ENCODE measurements at regions of chr7 and their contacts with region 1.

Region 1: DNA sequence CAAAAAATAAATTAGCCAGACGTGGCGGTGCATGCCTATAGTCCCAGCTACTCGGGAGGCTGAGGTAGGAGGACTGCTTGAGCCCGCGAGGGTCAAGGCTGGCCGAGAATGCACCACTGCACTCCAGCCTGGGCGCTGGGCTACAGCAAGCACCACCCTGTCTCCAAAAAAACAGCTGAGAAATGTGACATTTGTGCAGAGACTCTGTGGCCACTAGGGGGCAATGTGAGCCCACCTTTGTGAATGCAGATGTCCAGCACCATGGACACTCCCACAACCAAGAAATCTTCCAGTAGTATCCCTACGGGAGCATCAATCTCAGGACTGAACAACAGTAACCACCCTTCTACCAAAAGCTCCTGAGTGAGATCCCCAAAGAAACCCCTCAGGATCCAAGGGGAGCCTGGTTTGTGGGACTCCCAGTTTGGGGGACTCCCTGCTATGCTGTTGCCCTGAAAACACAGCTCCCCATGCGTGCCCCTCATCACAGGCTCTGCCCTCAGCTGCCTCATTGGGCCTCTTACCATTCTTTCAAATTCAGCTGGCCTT is 6.2 kb upstream of the AHCYL2 start:
- DNase-seq: peak; percentile 58
- H3K4me3 ChIP-seq: no peak overlapping the region
- H3K27ac ChIP-seq: no peak overlapping the region
- H3K27me3 ChIP-seq: no peaks in the 10 kb centered on the region
- CTCF ChIP-seq: peak; percentile 90

Region 2: DNA sequence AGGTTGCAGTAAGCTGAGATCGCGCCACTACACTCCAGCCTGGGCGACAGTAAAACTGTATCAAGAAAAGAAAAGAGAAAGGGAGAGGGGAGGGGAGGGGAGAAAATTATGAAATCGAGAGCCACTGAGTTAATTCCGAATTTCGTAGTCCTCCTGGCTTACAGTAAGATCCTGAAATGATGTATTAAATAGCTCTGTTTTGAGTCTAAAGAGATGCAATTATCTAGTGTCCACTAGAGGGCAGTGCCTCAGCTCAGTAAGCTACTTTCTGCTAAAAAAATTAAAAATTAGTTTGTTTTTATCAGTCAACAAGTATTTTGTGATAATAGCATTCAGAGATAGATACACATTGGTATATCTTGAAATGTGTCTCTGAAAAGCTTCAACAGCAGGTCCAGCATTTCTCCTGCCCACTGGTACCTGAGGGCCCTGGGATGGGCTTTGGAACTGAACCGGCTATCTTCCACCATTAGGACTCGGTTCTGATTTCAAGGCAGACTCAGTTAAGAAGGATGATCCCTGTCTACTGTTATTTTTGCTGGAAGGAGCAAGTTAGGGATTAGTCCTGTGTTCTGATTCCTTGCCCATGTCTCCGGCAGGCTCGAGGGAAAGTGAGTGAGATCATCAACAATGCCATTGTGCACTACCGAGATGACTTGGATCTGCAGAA is 54.6 kb before region 1 on chr7:
- CTCF ChIA-PET with region 1: interaction called, 188 read pairs
- POLR2A ChIA-PET with region 1: no interaction called
- DNase-seq: peak; percentile 48
- H3K4me3 ChIP-seq: no peak overlapping the region
- H3K27ac ChIP-seq: no peak overlapping the region
- H3K27me3 ChIP-seq: peaks cover 19% of the 10 kb centered on the region
- CTCF ChIP-seq: peak; percentile 83

Region 3: DNA sequence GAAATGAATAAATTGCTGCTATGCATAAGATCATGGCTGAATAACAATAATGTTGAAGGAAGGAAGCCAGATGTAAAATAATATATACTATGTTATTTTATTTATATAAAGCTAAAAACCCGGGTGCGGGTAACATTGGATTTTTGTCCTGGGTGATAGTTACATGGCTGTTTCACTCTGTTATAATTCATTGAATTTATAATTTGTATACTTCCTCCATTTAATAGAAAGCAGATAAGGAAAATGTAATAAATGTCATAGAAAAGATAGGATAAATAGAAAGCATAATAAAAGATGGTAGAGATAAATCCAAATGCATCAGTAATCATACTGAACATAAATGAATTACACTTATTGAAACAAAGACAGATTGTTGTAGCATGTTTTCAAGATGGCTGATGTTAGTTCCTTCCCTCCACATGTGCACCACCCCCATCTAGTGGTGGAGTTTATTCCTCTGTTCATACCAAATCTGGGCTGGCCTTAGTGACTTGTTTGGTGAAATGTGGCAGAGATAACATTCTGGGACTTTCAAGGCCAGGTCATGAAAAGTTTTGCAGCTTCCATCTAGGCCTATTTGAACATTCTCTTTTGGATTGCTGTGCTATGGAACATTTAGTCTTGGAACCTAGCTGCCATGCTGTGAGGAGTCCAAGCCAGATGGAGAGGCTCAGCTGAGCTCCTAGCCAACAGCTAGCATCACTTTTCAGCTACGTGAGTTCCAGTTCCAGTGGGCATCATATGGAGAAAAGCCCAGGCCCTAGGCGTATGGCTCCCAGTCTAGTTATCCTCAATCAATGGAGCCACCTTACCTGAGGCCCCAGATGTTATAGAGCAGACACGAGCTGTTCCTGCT is 53.1 kb after region 1 on chr7:
- CTCF ChIA-PET with region 1: interaction called, 42 read pairs
- POLR2A ChIA-PET with region 1: no interaction called
- DNase-seq: peak; percentile 6
- H3K4me3 ChIP-seq: no peak overlapping the region
- H3K27ac ChIP-seq: no peak overlapping the region
- H3K27me3 ChIP-seq: no peaks in the 10 kb centered on the region
- CTCF ChIP-seq: peak; percentile 60

Region 4: GRCh38 chr7:129298268-129298893 is 79.8 kb after region 1 on chr7:
- CTCF ChIA-PET with region 1: interaction called, 126 read pairs
- POLR2A ChIA-PET with region 1: no interaction called
- DNase-seq: no peak
- H3K4me3 ChIP-seq: no peak overlapping the region
- H3K27ac ChIP-seq: no peak overlapping the region
- H3K27me3 ChIP-seq: no peaks in the 10 kb centered on the region
- CTCF ChIP-seq: peak; percentile 82

Region 5: GRCh38 chr7:129343099-129343700 is 124.6 kb after region 1 on chr7:
- CTCF ChIA-PET with region 1: interaction called, 13 read pairs
- POLR2A ChIA-PET with region 1: no interaction called
- DNase-seq: no peak
- H3K4me3 ChIP-seq: no peak overlapping the region
- H3K27ac ChIP-seq: no peak overlapping the region
- H3K27me3 ChIP-seq: no peaks in the 10 kb centered on the region
- CTCF ChIP-seq: peak; percentile 76

Region 6: DNA sequence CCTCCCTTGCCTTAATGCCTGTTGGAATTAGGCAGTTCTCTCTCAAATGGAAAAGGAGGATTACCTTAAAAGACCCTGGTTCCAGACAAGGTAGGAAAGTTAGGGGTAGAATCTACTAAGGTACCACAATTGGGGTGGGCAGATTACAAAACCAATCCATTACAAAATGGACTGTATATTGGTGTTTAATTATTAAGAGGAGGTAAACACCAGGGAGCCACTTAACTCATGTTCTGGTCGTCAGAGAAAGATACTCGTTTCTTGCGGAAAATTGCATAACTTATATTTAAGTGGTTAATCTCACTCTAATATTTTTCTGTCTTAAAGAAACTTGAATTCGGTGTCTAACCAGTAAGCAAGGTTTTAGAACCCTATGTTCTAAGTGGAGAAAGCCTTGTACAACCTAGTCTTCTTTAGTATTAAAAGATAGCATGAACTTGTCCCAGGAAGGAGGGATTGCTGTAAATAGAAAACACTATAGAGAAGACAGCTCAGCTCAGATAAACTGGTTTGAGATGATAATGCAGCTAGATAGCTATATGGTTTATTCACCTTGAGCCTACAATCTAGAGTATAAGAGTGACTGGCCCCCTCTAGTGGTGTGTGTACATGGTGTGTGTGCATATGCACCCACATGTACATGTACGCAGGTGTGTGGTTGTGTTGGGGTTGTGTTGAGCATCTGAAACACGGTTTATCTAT is 157.6 kb after region 1 on chr7:
- CTCF ChIA-PET with region 1: interaction called, 42 read pairs
- POLR2A ChIA-PET with region 1: no interaction called
- DNase-seq: no peak
- H3K4me3 ChIP-seq: no peak overlapping the region
- H3K27ac ChIP-seq: no peak overlapping the region
- H3K27me3 ChIP-seq: no peaks in the 10 kb centered on the region
- CTCF ChIP-seq: peak; percentile 72

Region 7: DNA sequence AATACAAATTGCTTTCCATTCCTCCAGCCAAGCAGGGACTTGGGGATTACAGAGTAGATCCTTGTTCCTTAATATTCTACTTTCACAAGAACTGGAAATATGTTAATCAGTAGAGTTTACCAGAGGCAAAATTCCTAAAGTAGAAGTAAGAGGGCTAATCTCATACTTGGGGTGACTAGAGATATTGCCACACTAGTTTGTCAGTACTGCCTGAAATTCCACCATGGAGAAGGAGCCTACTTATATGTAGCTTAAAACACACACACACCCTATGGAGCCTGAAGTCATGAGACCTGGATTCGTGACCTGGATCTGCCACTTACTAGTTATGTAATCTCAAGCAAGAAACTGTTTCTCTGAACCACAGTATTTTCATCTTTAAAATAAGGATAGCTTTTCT is 249.5 kb after region 1 on chr7:
- CTCF ChIA-PET with region 1: interaction called, 121 read pairs
- POLR2A ChIA-PET with region 1: no interaction called
- DNase-seq: peak; percentile 10
- H3K4me3 ChIP-seq: no peak overlapping the region
- H3K27ac ChIP-seq: no peak overlapping the region
- H3K27me3 ChIP-seq: no peaks in the 10 kb centered on the region
- CTCF ChIP-seq: no peak